ENCODE measurements at regions of chr7 and their contacts with region 1.

Region 1: DNA sequence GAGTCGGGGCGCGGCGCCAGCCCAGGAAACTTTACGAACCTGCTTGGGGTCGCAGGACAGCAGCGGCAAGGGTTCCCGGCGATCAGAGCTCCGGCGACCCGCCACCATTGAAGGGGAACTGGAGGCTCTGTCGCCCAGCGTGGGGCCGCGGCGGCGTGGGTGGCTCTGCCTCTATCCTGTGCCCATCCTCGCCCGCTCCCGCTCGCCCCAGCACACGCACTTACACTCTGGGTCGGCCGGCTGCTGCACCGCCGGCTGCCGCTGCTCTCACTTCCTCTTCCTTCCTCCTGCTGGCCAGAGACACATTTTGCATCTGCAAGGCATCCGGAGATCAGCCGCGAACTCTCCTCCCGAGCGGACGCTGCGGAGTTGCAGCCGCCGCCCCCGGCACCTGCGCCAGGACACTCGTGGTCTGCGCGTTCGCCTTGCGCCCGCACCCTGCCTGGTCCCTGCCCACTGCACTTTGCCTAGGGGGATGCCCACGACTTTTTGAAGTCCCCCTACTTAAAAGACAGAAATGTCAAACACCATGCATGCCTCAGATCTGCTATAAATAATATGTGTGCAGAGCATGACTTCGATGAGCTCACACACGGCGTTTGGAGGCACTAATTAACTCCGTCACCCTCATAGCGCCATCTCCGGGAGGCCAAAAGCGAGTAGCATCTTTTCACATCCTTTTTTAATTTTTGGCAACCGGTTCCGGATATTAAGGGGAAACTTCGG is at the start of gene ELMO1:
- DNase-seq: peak; percentile 85
- ATAC-seq: peak; percentile 87 to 92
- total RNA-seq, gene ELMO1: 15.6 to 24.6 TPM

Region 2: DNA sequence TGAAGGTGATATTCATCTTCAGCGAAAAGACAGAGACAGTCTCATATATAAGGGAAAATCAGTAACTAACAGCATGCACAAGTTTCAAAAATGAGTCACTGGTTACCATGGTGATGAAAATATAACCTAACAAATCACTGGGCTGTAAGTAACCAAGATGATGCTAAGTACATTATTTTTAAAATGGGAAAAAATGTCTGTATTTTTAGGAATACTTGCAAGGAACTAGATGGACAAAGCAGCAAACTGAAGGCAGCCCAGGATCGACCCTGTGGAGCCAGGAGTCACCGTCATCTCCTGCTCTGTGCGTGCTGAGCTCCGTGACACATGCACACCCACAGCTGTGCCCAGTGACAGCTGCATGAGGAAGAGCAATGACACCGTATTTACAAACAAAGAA is 137.4 kb before region 1 on chr7:
- intact Hi-C with region 1: no loop called
- DNase-seq: no peak
- ATAC-seq: peak in 1 of 2 donors; percentile 71

Region 3: DNA sequence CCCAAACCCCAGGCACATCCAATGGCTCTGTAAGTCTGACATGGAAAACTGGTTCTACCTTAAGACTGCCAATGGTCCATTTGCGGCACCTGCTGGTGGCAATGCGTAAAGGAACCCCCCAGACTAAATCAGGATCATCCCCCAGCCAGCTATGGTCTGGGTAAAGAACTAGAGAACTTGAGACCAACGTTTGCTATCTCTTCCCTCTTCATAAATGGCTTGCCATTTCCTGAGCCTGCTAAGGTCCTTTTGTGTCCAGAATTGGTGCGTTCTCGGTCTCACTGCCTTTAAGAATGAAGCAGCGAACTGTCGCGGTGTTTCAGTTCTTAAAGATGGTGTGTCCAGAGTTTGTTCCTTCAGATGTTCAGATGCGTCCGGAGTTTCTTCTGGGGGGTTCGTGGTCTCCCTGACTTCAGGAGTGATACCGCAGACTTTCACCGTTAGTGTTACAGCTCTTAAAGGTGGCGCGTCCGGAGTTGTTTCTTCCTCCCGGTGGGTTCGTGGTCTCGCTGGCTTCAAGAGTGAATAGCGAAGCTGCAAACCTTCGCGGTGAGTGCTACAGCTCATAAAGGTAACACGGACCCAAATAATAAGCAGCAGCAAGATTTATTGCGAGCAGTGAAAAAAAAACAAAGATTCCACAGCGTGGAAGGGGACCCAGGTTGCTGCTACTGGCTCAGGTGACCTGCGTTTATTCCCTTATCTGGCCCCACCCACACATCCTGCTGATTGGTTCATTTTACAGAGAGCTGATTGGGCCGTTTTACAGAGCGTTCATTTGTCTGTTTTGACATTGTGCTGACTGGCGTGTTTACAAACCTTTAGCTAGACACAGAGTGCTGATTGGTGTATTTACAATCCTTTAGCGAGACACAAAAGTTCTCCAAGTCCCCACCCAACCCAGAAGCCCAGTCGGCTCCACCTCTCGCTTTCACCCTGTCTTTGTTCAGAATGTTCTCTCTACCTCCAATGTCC is 95.5 kb before region 1 on chr7:
- intact Hi-C with region 1: loop called (anchors 10 kb)
- DNase-seq: no peak
- ATAC-seq: peak; percentile 17 to 31

Measured in left cardiac atrium (tissue), 4 donors.